ENCODE measurements at regions of chr2 and their contacts with region 1.

Region 1: GRCh38 chr2:143686585-143687164 is 557.5 kb downstream of the ARHGAP15 start:
- DNase-seq: peak; percentile 32 to 55 (median 53)
- H3K4me3 ChIP-seq: no peak overlapping the region
- H3K27ac ChIP-seq: no peak overlapping the region
- H3K4me1 ChIP-seq: peaks cover 0 to 5% (median 3%) of the 10 kb centered on the region in 4 experiments
- H3K27me3 ChIP-seq: no peaks in the 10 kb centered on the region

Region 2: GRCh38 chr2:143698888-143699570 is 12.4 kb after region 1 on chr2:
- CTCF ChIA-PET with region 1: interaction called, 10 read pairs
- POLR2A ChIA-PET with region 1: no interaction called
- DNase-seq: peak in 1 of 3 donors; percentile 28
- H3K4me3 ChIP-seq: no peak overlapping the region
- H3K27ac ChIP-seq: no peak overlapping the region
- H3K4me1 ChIP-seq: peaks cover 0 to 5% (median 2%) of the 10 kb centered on the region in 4 experiments
- H3K27me3 ChIP-seq: no peaks in the 10 kb centered on the region